Left ventricle myocardium inferior (tissue), 1 donor: ENCODE measurements at regions of chr4 and their contacts with region 1.

Region 1: GRCh38 chr4:87848622-87849351 is 16.0 kb downstream of the MEPE start:
- DNase-seq: peak; percentile 15
- H3K4me3 ChIP-seq: peak overlapping the region; percentile 46
- H3K27ac ChIP-seq: peak overlapping the region; percentile 37
- H3K4me1 ChIP-seq: peaks cover 16% of the 10 kb centered on the region
- H3K27me3 ChIP-seq: no peaks in the 10 kb centered on the region
- CTCF ChIP-seq: peak; percentile 73

Region 2: DNA sequence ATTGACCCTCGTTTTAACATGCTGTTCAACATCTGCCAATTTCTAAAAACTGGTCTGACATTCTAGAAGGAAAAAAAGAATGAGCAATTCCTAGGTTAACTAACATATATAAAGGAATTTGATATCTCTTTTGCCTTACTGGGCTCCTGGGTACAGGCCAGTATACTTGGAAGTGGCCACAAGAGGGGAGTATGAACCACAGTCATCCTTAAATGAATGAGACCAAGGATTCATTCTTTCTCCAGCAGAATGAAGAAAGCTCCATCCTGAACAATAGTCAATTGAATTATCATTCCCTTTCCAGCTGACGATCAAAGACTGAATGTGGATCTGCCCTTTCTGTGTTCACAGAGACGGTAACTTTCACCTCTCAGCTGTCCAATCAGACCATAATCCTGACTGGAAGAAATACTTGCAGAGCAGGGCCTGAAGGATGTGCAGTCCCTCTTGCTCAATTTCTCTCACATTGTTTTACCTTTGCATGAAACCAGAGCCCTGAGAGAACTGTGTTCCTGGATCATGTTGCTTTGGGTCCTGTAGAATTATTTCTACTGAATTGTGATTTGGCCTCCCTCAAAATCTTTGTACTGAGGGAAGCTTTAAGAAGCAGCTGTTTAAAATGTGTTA is 304.8 kb before region 1 on chr4:
- intact Hi-C with region 1: loop called (anchors 10 kb)
- DNase-seq: no peak
- H3K4me3 ChIP-seq: no peak overlapping the region
- H3K27ac ChIP-seq: peak overlapping the region; percentile 81
- H3K4me1 ChIP-seq: peaks cover 31% of the 10 kb centered on the region
- H3K27me3 ChIP-seq: no peaks in the 10 kb centered on the region
- CTCF ChIP-seq: peak; percentile 73

Region 3: DNA sequence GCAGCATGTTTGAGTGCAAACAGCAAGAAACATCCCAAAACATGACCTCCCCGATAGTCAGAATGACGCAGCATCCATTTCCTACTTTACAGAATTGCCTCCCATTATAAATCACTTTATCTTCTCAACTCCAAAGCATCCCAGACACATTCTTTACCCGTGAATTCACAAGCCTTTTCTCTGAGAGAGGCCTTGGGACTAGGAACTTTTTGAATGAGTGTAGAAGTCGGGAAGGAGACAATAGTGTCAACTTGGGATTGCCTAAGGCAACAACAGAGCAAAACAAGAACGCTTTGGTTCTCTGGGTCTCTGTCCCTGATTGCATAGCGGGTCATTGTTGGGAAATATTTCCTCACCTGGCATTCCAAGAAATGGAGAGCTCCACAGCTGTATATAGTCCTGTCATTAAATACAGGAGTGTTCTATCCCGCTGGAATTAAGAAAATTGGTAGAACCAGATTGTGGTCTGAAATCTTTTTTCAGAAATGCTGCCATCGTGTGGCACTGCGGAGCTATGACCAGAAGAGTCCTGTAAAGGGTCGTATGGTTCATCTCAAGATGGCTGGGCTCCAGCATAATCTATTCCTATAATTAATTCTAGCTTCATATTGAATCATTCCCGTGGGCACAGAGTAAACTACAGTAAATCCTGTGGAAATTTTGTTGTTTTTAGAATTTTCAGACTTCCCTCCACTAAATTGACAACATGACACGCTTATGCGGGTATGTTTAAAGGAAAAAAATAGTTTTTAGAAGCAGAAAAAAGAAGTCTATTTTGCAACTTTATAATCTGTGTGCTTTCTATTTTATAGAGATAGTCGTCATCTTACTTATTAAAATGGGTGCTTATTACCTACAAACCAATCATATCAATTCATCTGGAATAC is 124.7 kb after region 1 on chr4:
- intact Hi-C with region 1: loop called (anchors 5 kb)
- DNase-seq: peak; percentile 30
- H3K4me3 ChIP-seq: peak overlapping the region; percentile 13
- H3K27ac ChIP-seq: no peak overlapping the region
- H3K4me1 ChIP-seq: no peaks in the 10 kb centered on the region
- H3K27me3 ChIP-seq: peaks cover 17% of the 10 kb centered on the region
- CTCF ChIP-seq: peak; percentile 90